Esophagus muscularis mucosa (tissue), 4 donors: ENCODE measurements at regions of chr10 and their contacts with region 1.

Region 1: DNA sequence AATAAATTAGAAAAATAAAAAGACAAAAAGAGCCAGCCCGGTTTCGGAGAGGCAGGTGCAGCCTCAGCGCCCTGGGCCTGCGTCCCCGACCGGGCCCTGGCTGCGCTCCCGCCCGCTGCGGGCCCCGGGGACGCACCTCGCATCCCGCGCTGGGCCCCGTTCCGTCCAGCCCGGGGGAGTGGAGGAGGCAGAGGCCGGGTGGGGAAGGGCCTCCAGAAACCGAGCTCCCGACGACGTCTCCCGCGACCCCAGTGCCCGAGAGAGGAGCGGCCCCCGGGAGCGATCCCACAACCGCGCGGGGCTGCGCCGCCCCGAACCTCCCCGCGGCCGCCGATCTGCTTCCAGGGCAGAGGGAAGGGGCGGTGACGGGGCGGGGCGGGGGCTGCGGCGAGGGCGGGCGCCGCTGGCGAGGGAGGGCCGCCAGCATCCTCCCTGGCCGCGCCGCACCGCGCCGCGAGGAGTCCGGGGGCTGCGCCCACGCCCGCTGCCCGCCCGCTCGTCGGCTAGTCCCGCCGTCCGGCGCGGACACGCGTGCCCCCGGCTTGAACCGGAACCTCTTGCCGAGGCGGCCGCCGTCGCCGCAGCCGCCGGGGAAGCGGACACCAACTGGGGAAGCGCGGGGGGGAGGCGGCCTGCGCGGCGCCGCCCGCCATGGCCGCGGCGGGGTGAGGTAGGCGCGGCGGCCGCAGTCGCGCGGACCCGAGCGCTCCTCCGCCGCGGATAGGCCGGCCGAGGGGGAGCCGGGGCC is at the start of gene CCNY:
- DNase-seq: no peak
- H3K4me3 ChIP-seq: peak within 1 kb of the TSS; percentile 91 to 95 (median 95)
- H3K27ac ChIP-seq: peak within 1 kb of the TSS; percentile 86 to 91 (median 90)
- H3K4me1 ChIP-seq: peaks cover 60 to 85% (median 83%) of the 10 kb centered on the region in 4 donors
- H3K27me3 ChIP-seq: no peaks in the 10 kb centered on the region
- CTCF ChIP-seq: no peak
- EP300 ChIP-seq: no peak
- POLR2A ChIP-seq: peak; percentile 57
- total RNA-seq, gene CCNY: 36.6 to 53.5 (median 47.0) TPM

Region 2: GRCh38 chr10:35126530-35127296 is 209.5 kb before region 1 on chr10 and contains the start of gene CREM:
- intact Hi-C with region 1: loop called (anchors 5 kb)
- DNase-seq: peak; percentile 100
- H3K4me3 ChIP-seq: peak within 1 kb of the TSS; percentile 76 to 95 (median 84)
- H3K27ac ChIP-seq: peak within 1 kb of the TSS; percentile 97 to 100 (median 100)
- H3K4me1 ChIP-seq: peaks cover 14 to 42% (median 36%) of the 10 kb centered on the region in 4 donors
- H3K27me3 ChIP-seq: no peaks in the 10 kb centered on the region
- CTCF ChIP-seq: peak; percentile 86 to 97 (median 86)
- EP300 ChIP-seq: peak; percentile 92
- POLR2A ChIP-seq: peak; percentile 94
- total RNA-seq, gene CREM: 25.7 to 65.9 (median 29.5) TPM

Region 3: GRCh38 chr10:35416619-35417312 is 80.5 kb after region 1 on chr10:
- intact Hi-C with region 1: loop called (anchors 5 kb)
- DNase-seq: no peak
- H3K4me3 ChIP-seq: no peak overlapping the region
- H3K27ac ChIP-seq: peak overlapping the region in 2 of 4 donors; percentile 30 to 59
- H3K4me1 ChIP-seq: peaks cover 62 to 91% (median 68%) of the 10 kb centered on the region in 4 donors
- H3K27me3 ChIP-seq: no peaks in the 10 kb centered on the region
- CTCF ChIP-seq: no peak
- EP300 ChIP-seq: no peak
- POLR2A ChIP-seq: no peak

Region 4: GRCh38 chr10:35451151-35452016 is 115.1 kb after region 1 on chr10:
- intact Hi-C with region 1: loop called (anchors 10 kb)
- DNase-seq: no peak
- H3K4me3 ChIP-seq: no peak overlapping the region
- H3K27ac ChIP-seq: peak overlapping the region; percentile 45 to 63 (median 55)
- H3K4me1 ChIP-seq: peaks cover 85 to 93% (median 92%) of the 10 kb centered on the region in 4 donors
- H3K27me3 ChIP-seq: no peaks in the 10 kb centered on the region
- CTCF ChIP-seq: no peak
- EP300 ChIP-seq: no peak
- POLR2A ChIP-seq: no peak

Region 5: GRCh38 chr10:35563261-35563891 is 227.1 kb after region 1 on chr10:
- intact Hi-C with region 1: loop called (anchors 5 kb)
- DNase-seq: peak; percentile 92
- H3K4me3 ChIP-seq: no peak overlapping the region
- H3K27ac ChIP-seq: no peak overlapping the region
- H3K4me1 ChIP-seq: peaks cover 35 to 37% (median 36%) of the 10 kb centered on the region in 4 donors
- H3K27me3 ChIP-seq: no peaks in the 10 kb centered on the region
- CTCF ChIP-seq: peak; percentile 84 to 99 (median 91)
- EP300 ChIP-seq: no peak
- POLR2A ChIP-seq: no peak